ENCODE measurements at regions of chr6 and their contacts with region 1.

Region 1: GRCh38 chr6:36724514-36725390 is 27.1 kb downstream of the RAB44 start:
- DNase-seq: peak; percentile 76 to 88 (median 83)
- ATAC-seq: peak; percentile 84 to 97 (median 92)
- H3K4me3 ChIP-seq: no peak overlapping the region
- H3K27ac ChIP-seq: no peak overlapping the region
- H3K4me1 ChIP-seq: no peaks in the 10 kb centered on the region
- H3K27me3 ChIP-seq: no peaks in the 10 kb centered on the region
- CTCF ChIP-seq: peak in 3 of 4 donors; percentile 19 to 46 (median 39)

Region 2: DNA sequence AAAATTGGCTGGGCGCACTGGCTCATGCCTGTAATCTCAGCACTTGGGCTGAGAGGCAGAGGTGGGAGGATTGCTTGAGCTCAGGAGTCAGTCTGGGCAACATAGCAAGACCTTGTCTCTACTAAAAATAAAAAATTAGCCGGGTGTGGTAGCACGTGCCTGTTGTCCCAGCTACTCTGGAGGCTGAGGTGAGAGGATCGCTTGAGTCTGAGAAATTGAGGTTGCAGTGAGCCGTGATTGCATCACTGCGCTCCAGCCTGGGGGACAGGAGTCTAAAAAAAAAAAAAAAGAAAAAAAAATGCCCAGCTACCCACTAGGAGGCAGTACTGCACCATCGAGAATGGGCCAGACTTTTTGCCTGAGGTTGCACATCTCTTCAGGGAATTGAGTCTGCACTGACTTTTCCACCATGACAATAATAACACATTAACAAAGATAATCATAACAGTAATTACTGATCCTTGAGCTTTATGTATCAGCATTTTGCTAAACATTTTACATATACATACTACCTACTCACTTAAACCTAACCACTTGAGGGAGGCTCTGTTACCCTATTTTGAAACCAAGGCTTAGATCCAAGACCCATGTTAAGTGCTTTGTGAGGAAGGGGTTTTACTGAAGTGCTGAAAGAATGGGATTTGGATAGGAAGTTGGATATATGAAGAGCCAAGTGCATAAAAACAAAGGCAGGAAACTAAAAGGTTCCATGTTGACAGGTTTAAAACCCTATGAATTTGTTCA is 109.6 kb before region 1 on chr6:
- intact Hi-C with region 1: loop called in 2 of 3 experiments (anchors 5 to 10 kb)
- DNase-seq: peak in 3 of 6 donors; percentile 21 to 46 (median 27)
- ATAC-seq: peak; percentile 54 to 66 (median 58)
- H3K4me3 ChIP-seq: no peak overlapping the region
- H3K27ac ChIP-seq: peak overlapping the region in 1 of 4 donors; percentile 4
- H3K4me1 ChIP-seq: peaks cover 7 to 19% (median 11%) of the 10 kb centered on the region in 3 donors
- H3K27me3 ChIP-seq: no peaks in the 10 kb centered on the region
- CTCF ChIP-seq: peak; percentile 24 to 56 (median 38)

Region 3: GRCh38 chr6:36858407-36858981 is 133.7 kb after region 1 on chr6:
- intact Hi-C with region 1: no loop called
- DNase-seq: no peak
- ATAC-seq: peak; percentile 45 to 60 (median 58)
- H3K4me3 ChIP-seq: no peak overlapping the region
- H3K27ac ChIP-seq: no peak overlapping the region
- H3K4me1 ChIP-seq: no peaks in the 10 kb centered on the region
- H3K27me3 ChIP-seq: no peaks in the 10 kb centered on the region
- CTCF ChIP-seq: no peak